Endothelial cell of umbilical vein (primary cell): ENCODE measurements at regions of chr6 and their contacts with region 1.

Region 1: DNA sequence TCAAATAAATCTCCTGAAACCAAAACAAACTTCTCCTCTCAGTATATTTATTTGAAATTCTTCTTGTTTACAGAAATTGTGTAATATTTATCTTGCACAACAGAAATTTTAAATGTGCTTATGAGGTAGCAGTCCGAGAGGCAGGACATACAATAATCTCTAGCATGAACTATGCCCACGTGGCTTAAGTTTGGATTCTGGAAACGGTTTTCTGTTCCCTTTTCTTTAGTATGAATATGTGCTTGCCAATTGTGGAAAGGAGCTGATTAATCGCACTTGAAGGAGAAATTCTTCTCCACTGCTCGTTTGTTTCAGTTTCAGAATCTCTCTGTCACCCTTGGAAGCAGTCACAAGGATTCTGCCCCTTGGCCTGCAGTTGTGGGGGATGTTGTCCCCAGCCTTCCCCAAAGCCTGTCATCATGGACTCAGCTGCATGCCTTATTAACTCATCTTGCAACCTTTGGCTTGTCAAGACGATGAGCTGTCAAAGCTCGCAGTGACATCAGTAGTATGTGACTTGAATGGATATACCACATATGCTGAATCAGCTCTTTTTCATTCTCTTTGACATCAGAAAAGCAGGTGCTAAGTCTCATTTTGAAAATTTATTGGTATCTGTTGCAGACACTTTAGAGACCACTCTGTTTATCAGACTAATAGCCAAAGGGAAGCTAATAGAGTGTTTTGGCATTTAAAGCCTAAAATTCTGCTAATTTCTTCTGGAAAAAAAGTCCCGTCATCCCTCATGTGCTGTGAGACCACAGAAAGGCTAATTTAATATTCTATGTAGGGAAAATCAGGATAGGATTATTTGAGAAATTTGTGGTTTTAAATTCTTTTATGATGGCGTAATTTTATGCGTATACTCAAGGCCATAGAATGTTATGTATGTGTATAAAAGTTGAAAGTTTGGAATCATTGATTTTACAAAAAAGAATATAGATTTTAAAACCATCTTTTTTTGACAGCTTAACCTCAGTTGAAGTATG is 186.8 kb downstream of the ARID1B start:
- DNase-seq: no peak
- H3K4me3 ChIP-seq: no peak overlapping the region
- H3K27ac ChIP-seq: no peak overlapping the region
- H3K4me1 ChIP-seq: no peaks in the 10 kb centered on the region
- H3K27me3 ChIP-seq: no peaks in the 10 kb centered on the region
- CTCF ChIP-seq: no peak
- POLR2A ChIP-seq: no peak

Region 2: GRCh38 chr6:156933201-156934068 is 30.6 kb before region 1 on chr6:
- CTCF ChIA-PET with region 1: no interaction called
- POLR2A ChIA-PET with region 1: no interaction called
- dilution Hi-C with region 1: no loop called
- intact Hi-C with region 1: no loop called
- DNase-seq: no peak
- H3K4me3 ChIP-seq: no peak overlapping the region
- H3K27ac ChIP-seq: no peak overlapping the region
- H3K4me1 ChIP-seq: no peaks in the 10 kb centered on the region
- H3K27me3 ChIP-seq: no peaks in the 10 kb centered on the region
- CTCF ChIP-seq: no peak
- POLR2A ChIP-seq: no peak

Region 3: GRCh38 chr6:156953479-156954146 is 10.4 kb before region 1 on chr6:
- CTCF ChIA-PET with region 1: interaction called, 12 read pairs
- POLR2A ChIA-PET with region 1: no interaction called
- dilution Hi-C with region 1: no loop called
- intact Hi-C with region 1: no loop called
- DNase-seq: peak; percentile 93
- H3K4me3 ChIP-seq: no peak overlapping the region
- H3K27ac ChIP-seq: no peak overlapping the region
- H3K4me1 ChIP-seq: peaks cover 38% of the 10 kb centered on the region
- H3K27me3 ChIP-seq: no peaks in the 10 kb centered on the region
- CTCF ChIP-seq: peak in 1 of 2 donors; percentile 6
- POLR2A ChIP-seq: no peak